HCT116 (cell line): ENCODE measurements at regions of chr7 and their contacts with region 1.

Region 1: GRCh38 chr7:120805636-120806388 is 52.1 kb downstream of the TSPAN12 start:
- DNase-seq: peak; percentile 40
- ATAC-seq: peak; percentile 83
- H3K4me3 ChIP-seq: no peak overlapping the region
- H3K27ac ChIP-seq: no peak overlapping the region
- H3K4me1 ChIP-seq: no peaks in the 10 kb centered on the region
- H3K27me3 ChIP-seq: no peaks in the 10 kb centered on the region
- CTCF ChIP-seq: peak; percentile 65 to 85 (median 76)
- POLR2A ChIP-seq: no peak
- RAD21 ChIP-seq: peak; percentile 70

Region 2: DNA sequence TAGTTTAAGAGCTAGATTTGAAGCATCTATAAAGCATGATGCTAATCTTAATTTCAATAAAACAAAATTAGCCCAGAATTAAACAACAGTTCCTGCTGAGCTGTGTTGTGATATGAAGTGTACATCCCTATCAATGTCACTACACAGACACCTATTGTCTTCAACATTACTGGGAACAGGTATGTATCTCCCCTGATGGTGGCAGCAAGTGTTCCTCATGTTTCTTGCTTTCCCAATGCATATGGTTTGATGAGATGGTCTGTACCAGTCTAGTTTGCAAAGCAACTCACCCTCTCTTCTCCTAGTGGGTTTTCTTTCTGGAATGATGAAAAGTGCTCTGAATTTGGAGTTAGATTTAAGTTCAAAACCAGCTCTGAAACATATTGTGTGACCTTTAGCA is 14.1 kb after region 1 on chr7:
- CTCF ChIA-PET with region 1: interaction called, 13 read pairs
- POLR2A ChIA-PET with region 1: no interaction called
- RAD21 ChIA-PET with region 1: no interaction called
- intact Hi-C with region 1: no loop called
- DNase-seq: no peak
- ATAC-seq: no peak
- H3K4me3 ChIP-seq: no peak overlapping the region
- H3K27ac ChIP-seq: no peak overlapping the region
- H3K4me1 ChIP-seq: no peaks in the 10 kb centered on the region
- H3K27me3 ChIP-seq: no peaks in the 10 kb centered on the region
- CTCF ChIP-seq: no peak
- POLR2A ChIP-seq: no peak
- RAD21 ChIP-seq: peak; percentile 34; the same call in 1 of the 2 replicates

Region 3: DNA sequence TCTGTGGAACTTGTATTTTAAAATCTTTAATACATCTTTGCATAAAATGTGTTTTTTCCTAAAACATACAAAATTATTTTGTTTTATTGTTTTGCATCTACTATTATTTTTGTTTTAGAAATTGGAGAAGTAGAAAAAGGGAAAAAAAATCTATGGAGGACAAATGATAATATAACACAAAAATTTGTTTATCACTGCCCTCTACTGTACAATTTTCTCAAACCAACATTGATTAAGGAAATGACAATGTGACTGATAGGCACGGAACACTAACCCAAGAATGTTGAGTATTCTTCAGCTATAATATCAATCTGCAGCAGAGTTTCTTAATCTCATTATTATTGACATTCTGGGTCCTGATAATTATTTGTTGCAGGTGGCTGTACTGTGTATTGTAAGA is 135.3 kb after region 1 on chr7:
- CTCF ChIA-PET with region 1: no interaction called
- POLR2A ChIA-PET with region 1: no interaction called
- RAD21 ChIA-PET with region 1: no interaction called
- intact Hi-C with region 1: loop called (anchors 5 kb)
- DNase-seq: peak; percentile 4
- ATAC-seq: peak; percentile 72
- H3K4me3 ChIP-seq: no peak overlapping the region
- H3K27ac ChIP-seq: no peak overlapping the region
- H3K4me1 ChIP-seq: no peaks in the 10 kb centered on the region
- H3K27me3 ChIP-seq: no peaks in the 10 kb centered on the region
- CTCF ChIP-seq: peak in 2 of 3 experiments; percentile 42 to 46; a peak in 3 of 6 replicates
- POLR2A ChIP-seq: no peak
- RAD21 ChIP-seq: peak; percentile 61

Region 4: DNA sequence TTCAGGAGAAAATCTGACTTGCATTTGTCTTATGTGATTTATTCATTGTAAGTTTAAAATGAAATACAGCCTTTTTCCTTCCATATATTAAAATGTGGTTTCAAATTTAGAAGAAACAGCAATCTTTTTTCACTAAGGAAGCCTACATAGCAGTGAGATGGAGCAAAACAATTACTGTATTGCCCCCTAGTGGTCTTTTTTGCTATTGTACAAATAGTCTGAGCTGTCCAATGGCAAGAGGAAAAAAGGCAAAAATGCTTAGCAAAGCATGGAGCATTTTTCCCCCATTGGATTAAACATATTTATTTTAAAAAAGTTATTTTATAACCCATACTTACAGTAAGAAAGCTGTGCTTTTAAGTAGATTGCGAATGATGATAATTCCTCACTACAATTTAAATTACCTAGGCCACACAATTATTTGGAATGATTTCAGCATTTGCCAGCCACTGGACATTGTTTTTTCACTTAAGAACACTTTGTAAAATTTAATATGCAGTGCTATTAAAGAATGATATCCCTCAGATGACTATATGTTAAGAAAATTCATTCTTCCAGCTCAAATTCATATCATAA is 302.2 kb after region 1 on chr7:
- CTCF ChIA-PET with region 1: interaction called, 3 read pairs
- POLR2A ChIA-PET with region 1: no interaction called
- RAD21 ChIA-PET with region 1: no interaction called
- intact Hi-C with region 1: loop called (anchors 5 kb)
- DNase-seq: peak; percentile 52
- ATAC-seq: peak; percentile 97
- H3K4me3 ChIP-seq: no peak overlapping the region
- H3K27ac ChIP-seq: no peak overlapping the region
- H3K4me1 ChIP-seq: peaks cover under 1 to 3% of the 10 kb centered on the region in 2 experiments; a peak in 2 of 4 replicates
- H3K27me3 ChIP-seq: no peaks in the 10 kb centered on the region
- CTCF ChIP-seq: peak; percentile 67 to 84 (median 77)
- POLR2A ChIP-seq: no peak
- RAD21 ChIP-seq: peak; percentile 85